Activated CD8-positive, alpha-beta T cell treated with anti-CD3 and anti-CD28 coated beads for 36 hours (primary cell): ENCODE measurements at regions of chr6 and their contacts with region 1.

Region 1: DNA sequence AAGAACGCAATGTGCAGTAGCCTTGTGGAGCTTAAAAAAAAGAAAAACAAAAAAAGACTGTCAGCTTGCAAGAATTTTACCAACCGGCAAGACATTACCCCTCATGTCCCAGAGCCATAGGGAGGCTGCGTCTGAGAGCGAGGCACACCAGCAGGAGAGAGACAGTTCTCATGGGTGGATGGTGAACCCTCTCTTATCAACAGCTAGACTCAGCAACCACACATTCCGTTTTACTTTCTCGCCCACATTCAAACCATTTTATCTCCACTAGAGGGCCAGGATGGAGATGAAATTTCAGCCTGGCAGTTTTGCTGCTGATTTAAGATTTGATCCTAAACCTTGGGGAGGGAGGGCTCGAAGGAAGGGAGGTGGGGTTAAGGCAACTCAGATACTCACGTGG is 247.0 kb downstream of the ATXN1 start:
- DNase-seq: peak; percentile 48
- ATAC-seq: peak; percentile 49
- H3K4me3 Mint-ChIP-seq: no peak overlapping the region
- H3K27ac Mint-ChIP-seq: peak overlapping the region; percentile 8
- H3K4me1 Mint-ChIP-seq: peaks cover 74% of the 10 kb centered on the region
- H3K27me3 Mint-ChIP-seq: no peaks in the 10 kb centered on the region
- CTCF ChIP-seq: peak; percentile 61

Region 2: GRCh38 chr6:16332175-16332542 is 182.1 kb before region 1 on chr6:
- CTCF ChIA-PET with region 1: interaction called, 29 read pairs
- POLR2A ChIA-PET with region 1: no interaction called
- intact Hi-C with region 1: no loop called
- DNase-seq: peak; percentile 90
- ATAC-seq: peak; percentile 99
- H3K4me3 Mint-ChIP-seq: no peak overlapping the region
- H3K27ac Mint-ChIP-seq: no peak overlapping the region
- H3K4me1 Mint-ChIP-seq: peaks cover 3% of the 10 kb centered on the region
- H3K27me3 Mint-ChIP-seq: no peaks in the 10 kb centered on the region
- CTCF ChIP-seq: peak; percentile 81

Region 3: DNA sequence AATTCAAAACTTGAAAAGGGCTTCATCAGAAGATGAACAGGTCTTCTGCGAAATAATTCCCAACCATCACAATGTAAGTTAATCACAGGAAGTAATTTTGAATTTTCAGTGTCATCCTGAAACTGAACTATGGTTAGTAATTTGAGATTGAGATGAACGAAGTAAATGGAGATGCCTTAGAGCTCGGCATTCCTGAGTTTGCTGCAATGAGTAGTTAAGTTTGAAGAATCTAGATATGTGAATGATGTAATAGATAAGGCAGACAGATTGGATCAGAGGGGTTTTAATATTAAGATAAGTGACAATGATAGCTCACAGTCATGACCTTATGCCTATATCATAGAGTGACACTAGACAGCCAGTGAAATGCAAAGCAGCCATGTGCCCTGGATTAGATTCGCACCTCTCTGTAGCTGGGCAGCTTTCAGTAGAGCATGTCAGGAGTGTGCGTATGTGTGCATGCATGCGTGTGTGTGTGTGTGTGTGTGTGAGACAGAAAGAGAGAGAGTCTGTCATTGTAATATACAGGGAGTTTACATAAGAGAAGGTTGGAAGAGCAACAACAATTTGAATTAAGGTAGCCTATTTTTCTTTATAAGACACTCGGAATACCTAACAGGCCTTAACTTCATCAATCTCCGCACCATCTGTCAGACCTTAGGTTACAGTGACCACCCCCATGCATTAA is 42.9 kb before region 1 on chr6:
- CTCF ChIA-PET with region 1: interaction called, 13 read pairs
- POLR2A ChIA-PET with region 1: interaction called, 4 read pairs
- intact Hi-C with region 1: no loop called
- DNase-seq: peak; percentile 55
- ATAC-seq: peak; percentile 51
- H3K4me3 Mint-ChIP-seq: no peak overlapping the region
- H3K27ac Mint-ChIP-seq: peak overlapping the region; percentile 86
- H3K4me1 Mint-ChIP-seq: peaks cover 78% of the 10 kb centered on the region
- H3K27me3 Mint-ChIP-seq: no peaks in the 10 kb centered on the region
- CTCF ChIP-seq: no peak

Region 4: DNA sequence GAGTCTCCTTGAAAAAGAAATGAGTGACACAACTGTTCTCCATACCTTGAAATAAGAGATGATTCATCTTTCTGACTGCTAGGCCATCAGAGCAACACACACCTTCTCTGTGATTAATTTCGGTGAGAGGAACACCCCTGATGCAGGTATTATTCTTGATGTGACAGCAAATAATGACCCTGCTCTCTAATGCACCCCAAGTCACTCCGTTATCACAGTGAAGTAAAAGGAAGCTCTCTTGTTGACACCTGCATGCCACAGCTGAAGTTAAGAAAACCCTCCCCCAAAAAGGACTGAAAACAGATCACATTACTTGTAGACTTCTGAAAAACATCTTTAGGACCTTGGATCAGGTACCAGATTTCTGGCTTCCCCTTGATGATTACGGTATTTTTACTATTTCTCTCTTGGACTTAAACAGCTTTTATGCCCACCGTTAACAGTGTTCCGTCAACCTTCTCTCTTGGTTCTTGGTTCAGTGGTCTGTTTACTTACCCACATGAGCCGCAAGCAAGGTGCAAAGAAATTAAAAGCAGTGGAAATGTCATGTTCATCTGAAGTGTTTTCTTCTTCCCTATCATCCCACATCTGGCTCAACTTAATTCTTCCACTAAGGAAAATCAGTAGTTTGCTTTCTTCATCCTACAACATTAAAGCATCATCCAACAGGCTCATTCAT is 26.1 kb before region 1 on chr6:
- CTCF ChIA-PET with region 1: interaction called, 19 read pairs
- POLR2A ChIA-PET with region 1: interaction called, 5 read pairs
- intact Hi-C with region 1: no loop called
- DNase-seq: no peak
- ATAC-seq: peak; percentile 48
- H3K4me3 Mint-ChIP-seq: peak overlapping the region; percentile 54
- H3K27ac Mint-ChIP-seq: peak overlapping the region; percentile 87
- H3K4me1 Mint-ChIP-seq: peaks cover 85% of the 10 kb centered on the region
- H3K27me3 Mint-ChIP-seq: no peaks in the 10 kb centered on the region
- CTCF ChIP-seq: no peak

Region 5: DNA sequence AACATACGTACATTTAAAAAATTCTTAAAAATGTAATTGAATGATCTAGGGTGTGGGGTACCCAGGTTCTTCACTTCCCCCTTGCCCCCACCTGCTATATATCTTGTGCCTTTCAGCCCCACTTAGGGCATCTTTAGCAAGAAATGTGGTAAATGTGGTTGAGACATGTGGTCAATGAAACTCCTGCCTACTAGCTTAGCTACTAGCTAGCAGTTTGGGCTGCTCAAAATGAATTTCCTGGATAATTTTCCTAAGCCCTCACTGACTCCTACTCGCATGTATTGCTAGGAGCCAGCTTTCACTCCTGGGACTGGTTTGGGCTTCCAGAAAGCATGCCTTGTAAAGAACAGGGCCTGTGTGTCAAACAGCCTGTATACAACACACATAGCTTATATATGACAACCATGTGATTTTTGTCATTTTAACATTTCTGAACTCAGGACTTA is 10.3 kb before region 1 on chr6:
- CTCF ChIA-PET with region 1: interaction called, 22 read pairs
- POLR2A ChIA-PET with region 1: no interaction called
- intact Hi-C with region 1: no loop called
- DNase-seq: peak; percentile 49
- ATAC-seq: peak; percentile 88
- H3K4me3 Mint-ChIP-seq: no peak overlapping the region
- H3K27ac Mint-ChIP-seq: no peak overlapping the region
- H3K4me1 Mint-ChIP-seq: peaks cover 55% of the 10 kb centered on the region
- H3K27me3 Mint-ChIP-seq: no peaks in the 10 kb centered on the region
- CTCF ChIP-seq: no peak

Region 6: DNA sequence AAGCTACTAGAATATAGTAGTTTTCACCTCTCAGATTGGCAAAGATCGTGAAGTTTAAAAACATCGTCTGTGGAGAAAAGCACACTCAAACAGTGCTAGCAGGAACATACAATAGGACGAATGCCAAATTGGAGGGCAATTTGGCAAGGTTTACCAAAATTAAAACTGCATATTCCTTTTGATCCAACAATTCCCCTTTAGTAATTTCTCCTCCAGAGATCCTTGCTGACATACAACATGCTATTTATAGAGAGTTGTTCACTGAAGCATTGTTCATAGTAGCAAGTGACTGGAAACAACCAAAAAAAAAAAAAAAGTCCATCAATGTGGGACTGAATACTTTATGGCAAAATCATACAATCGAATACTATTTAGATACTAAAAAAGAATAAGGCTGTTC is 44.8 kb after region 1 on chr6:
- CTCF ChIA-PET with region 1: no interaction called
- POLR2A ChIA-PET with region 1: no interaction called
- intact Hi-C with region 1: no loop called
- DNase-seq: no peak
- ATAC-seq: no peak
- H3K4me3 Mint-ChIP-seq: no peak overlapping the region
- H3K27ac Mint-ChIP-seq: no peak overlapping the region
- H3K4me1 Mint-ChIP-seq: no peaks in the 10 kb centered on the region
- H3K27me3 Mint-ChIP-seq: no peaks in the 10 kb centered on the region
- CTCF ChIP-seq: no peak

Region 7: GRCh38 chr6:16700202-16700915 is 186.1 kb after region 1 on chr6:
- CTCF ChIA-PET with region 1: interaction called, 10 read pairs
- POLR2A ChIA-PET with region 1: no interaction called
- intact Hi-C with region 1: no loop called
- DNase-seq: peak; percentile 75
- ATAC-seq: peak; percentile 17
- H3K4me3 Mint-ChIP-seq: peak overlapping the region; percentile 74
- H3K27ac Mint-ChIP-seq: peak overlapping the region; percentile 99
- H3K4me1 Mint-ChIP-seq: peaks cover 69% of the 10 kb centered on the region
- H3K27me3 Mint-ChIP-seq: no peaks in the 10 kb centered on the region
- CTCF ChIP-seq: no peak